ENCODE measurements at regions of chr14 and their contacts with region 1.

Region 1: DNA sequence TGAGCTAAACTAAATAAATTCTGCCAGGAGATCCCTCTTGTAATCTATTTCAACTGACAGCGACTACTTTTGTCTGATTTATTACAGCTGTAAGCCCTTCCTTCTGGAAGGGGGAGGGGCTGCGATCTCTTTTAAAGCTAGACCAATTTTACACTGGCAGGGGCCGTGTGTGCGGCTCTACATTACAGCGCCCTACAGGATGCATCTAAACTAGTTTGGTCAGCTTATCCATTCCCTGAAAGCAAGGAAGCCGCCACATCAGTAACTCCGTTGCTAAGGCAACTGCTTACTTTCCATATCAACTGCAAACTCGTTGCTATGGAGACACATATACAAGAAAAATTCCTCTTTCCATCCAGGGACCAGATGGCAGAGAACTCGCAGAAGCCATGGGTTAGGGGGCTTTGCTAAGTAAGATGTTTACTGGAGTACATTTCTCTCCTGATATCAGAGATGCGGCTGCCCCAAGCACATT is 17.4 kb downstream of the FOXN3 start:
- DNase-seq: peak; percentile 41 to 53
- H3K4me3 ChIP-seq: no peak overlapping the region
- H3K4me3 Mint-ChIP-seq: no peak overlapping the region
- H3K27ac Mint-ChIP-seq: peak overlapping the region; percentile 26
- H3K4me1 ChIP-seq: no peaks in the 10 kb centered on the region
- H3K4me1 Mint-ChIP-seq: no peaks in the 10 kb centered on the region
- H3K27me3 ChIP-seq: no peaks in the 10 kb centered on the region
- H3K27me3 Mint-ChIP-seq: no peaks in the 10 kb centered on the region
- CTCF ChIP-seq: no peak

Region 2: GRCh38 chr14:89378119-89378518 is 21.5 kb before region 1 on chr14:
- CTCF ChIA-PET with region 1: no interaction called
- POLR2A ChIA-PET with region 1: no interaction called
- intact Hi-C with region 1: no loop called
- DNase-seq: no peak
- H3K4me3 ChIP-seq: no peak overlapping the region
- H3K4me3 Mint-ChIP-seq: no peak overlapping the region
- H3K27ac Mint-ChIP-seq: no peak overlapping the region
- H3K4me1 ChIP-seq: no peaks in the 10 kb centered on the region
- H3K4me1 Mint-ChIP-seq: no peaks in the 10 kb centered on the region
- H3K27me3 ChIP-seq: no peaks in the 10 kb centered on the region
- H3K27me3 Mint-ChIP-seq: no peaks in the 10 kb centered on the region
- CTCF ChIP-seq: no peak

Region 3: DNA sequence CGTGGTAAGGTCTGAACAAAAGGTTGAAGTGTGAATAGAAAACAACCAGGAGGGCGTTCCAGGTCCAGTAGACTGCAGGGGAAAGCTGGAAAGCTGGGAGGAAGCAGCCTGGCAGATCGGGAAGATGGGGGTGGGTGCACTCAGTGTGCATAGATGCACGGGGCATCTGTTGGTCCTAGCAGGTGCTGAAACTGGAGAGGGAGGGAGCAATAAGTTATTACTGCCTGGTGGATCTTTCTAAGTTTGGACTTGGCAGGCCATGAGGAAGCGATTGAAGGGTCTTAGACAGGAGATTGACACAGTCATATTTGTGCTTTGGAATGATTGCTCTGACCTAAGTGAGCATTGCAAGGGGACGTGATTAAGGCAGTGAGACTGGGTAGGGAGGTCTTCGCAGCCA is 360.5 kb after region 1 on chr14:
- CTCF ChIA-PET with region 1: no interaction called
- POLR2A ChIA-PET with region 1: interaction called, 15 read pairs
- intact Hi-C with region 1: no loop called
- DNase-seq: no peak
- H3K4me3 ChIP-seq: no peak overlapping the region
- H3K4me3 Mint-ChIP-seq: no peak overlapping the region
- H3K27ac Mint-ChIP-seq: no peak overlapping the region
- H3K4me1 ChIP-seq: no peaks in the 10 kb centered on the region
- H3K4me1 Mint-ChIP-seq: no peaks in the 10 kb centered on the region
- H3K27me3 ChIP-seq: no peaks in the 10 kb centered on the region
- H3K27me3 Mint-ChIP-seq: peaks cover 5% of the 10 kb centered on the region
- CTCF ChIP-seq: no peak